Activated CD4-positive, alpha-beta T cell treated with anti-CD3 and anti-CD28 coated beads, Interleukin-2, amount 10 ng/mL, durations not matched to agents 24 days and 14 days (primary cell): ENCODE measurements at regions of chr20 and their contacts with region 1.

Region 1: DNA sequence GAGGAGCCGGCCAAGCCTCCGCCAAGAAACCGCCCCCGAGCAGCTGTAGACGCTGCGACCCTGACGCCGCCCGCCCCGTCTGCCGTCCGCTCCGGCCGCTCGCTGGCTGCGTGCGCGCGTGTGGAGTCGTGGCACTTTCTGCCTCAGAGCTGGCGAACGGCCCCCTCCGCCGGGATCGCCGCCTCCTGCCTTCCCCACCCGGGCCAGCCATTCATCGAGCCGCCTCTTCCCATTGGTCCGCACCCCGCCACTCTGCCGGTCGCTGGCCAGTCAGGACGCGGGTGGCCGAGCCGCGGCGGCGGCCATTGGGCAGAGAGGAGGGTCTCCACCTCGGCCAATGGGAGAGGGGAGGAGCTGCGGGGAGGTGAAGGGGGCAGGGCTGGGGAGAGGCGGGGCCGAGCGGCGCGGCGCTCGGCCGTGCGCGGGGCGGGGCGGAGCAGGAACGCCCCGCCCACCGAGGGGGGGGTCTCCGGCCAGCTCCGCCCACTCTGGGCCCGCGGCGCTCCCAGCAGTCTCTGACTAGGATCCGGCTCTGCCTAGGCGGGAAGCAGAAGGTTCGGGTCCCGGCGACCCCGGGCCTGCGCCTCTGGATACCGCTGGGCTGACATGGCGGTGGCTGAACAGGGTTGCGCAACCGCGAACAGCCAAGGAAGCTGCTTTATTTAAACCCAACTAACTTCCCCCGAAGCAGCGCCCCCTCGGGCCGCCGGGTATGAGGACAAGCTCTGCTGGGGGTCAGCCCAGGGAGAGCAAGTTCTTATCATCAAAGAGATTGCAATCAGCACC is at the start of gene RRBP1:
- DNase-seq: peak; percentile 99
- H3K4me3 Mint-ChIP-seq: peak within 1 kb of the TSS; percentile 90
- H3K27ac Mint-ChIP-seq: peak within 1 kb of the TSS; percentile 92
- H3K4me1 Mint-ChIP-seq: peaks cover 19% of the 10 kb centered on the region
- H3K27me3 Mint-ChIP-seq: peaks cover 39% of the 10 kb centered on the region
- total RNA-seq, gene RRBP1: 47.5 and 49.9 TPM in 2 replicates

Region 2: GRCh38 chr20:17417225-17417624 is 265.1 kb before region 1 on chr20:
- intact Hi-C with region 1: no loop called
- DNase-seq: no peak
- H3K4me3 Mint-ChIP-seq: no peak overlapping the region
- H3K27ac Mint-ChIP-seq: no peak overlapping the region
- H3K4me1 Mint-ChIP-seq: no peaks in the 10 kb centered on the region
- H3K27me3 Mint-ChIP-seq: peaks cover 8% of the 10 kb centered on the region

Region 3: DNA sequence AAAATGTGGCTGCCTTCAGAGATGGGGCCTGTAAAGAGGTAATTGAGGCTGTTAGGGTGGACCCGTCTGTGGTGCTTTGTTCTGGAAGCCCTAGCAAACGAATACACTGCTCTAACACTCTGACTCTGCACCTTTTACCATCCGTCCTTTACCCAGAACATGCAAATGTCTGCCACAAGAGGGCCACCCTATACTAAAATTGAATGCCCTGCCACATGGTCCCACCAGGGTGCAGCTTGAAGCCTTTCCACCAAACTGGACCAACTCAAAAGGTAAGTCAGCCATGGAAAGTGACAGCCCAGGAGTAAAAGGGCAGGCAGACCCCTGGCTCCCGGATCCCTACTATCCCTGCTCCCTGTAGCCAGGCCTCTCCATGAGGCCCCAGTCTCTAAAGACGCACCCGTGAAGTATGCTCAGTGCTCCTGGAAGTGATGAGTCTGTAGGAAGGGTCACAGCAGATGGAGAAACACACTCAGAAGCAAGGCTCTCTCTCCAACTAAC is 145.3 kb before region 1 on chr20:
- intact Hi-C with region 1: loop called (anchors 2 kb)
- DNase-seq: peak; percentile 91
- H3K4me3 Mint-ChIP-seq: no peak overlapping the region
- H3K27ac Mint-ChIP-seq: no peak overlapping the region
- H3K4me1 Mint-ChIP-seq: peaks cover 26% of the 10 kb centered on the region
- H3K27me3 Mint-ChIP-seq: peaks cover 25% of the 10 kb centered on the region

Region 4: GRCh38 chr20:17898548-17898994 is 216.3 kb after region 1 on chr20:
- intact Hi-C with region 1: loop called (anchors 1 kb)
- DNase-seq: peak; percentile 90
- H3K4me3 Mint-ChIP-seq: no peak overlapping the region
- H3K27ac Mint-ChIP-seq: no peak overlapping the region
- H3K4me1 Mint-ChIP-seq: peaks cover 24% of the 10 kb centered on the region
- H3K27me3 Mint-ChIP-seq: peaks cover 33% of the 10 kb centered on the region

Region 5: DNA sequence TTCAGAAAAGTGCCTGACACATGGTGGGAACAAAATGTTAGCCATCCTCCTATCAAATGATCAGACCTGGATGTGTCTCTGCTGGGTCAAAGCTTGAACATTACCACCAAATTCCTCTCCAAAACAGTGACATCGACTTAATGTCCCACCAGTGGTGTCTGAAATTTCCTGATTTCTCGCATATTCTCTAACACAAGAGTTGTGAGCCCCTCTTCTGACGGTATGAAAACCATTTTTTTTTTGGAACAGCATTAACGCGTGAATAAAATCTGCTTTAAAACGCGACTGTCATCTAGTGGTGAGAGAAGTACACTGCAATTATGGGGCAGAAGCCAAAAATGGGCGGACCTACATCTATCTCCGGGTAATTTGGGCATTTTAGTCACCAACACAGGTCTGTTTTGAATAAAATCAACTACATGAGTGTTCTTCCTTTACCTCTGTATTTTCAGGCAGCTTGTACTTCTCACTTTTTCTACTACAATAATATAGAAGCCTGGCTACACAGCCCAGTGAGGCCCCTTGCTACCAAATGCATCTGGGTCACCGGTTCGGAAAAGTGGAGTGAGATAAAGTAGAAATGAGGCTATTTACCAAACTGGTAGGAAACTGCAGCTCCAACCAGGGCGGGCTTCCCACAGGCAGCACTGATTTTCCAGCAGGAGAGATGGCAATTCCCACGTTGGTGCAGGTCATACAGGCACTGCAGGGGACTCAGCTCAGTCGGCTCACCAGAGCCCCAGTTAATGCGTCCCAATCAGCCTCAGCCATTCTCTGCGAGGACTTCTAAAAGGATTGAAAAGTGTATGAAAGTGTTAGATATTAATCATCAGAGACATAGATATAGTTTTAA is 313.9 kb after region 1 on chr20:
- intact Hi-C with region 1: loop called (anchors 1 kb)
- DNase-seq: peak; percentile 87
- H3K4me3 Mint-ChIP-seq: no peak overlapping the region
- H3K27ac Mint-ChIP-seq: no peak overlapping the region
- H3K4me1 Mint-ChIP-seq: peaks cover 38% of the 10 kb centered on the region
- H3K27me3 Mint-ChIP-seq: peaks cover 3% of the 10 kb centered on the region

Region 6: GRCh38 chr20:18587665-18588573 is 905.6 kb after region 1 on chr20 and contains the start of gene DTD1:
- intact Hi-C with region 1: loop called (anchors 5 kb)
- DNase-seq: peak; percentile 96
- H3K4me3 Mint-ChIP-seq: peak within 1 kb of the TSS; percentile 94
- H3K27ac Mint-ChIP-seq: peak within 1 kb of the TSS; percentile 88
- H3K4me1 Mint-ChIP-seq: peaks cover 25% of the 10 kb centered on the region
- H3K27me3 Mint-ChIP-seq: peaks cover 7% of the 10 kb centered on the region
- total RNA-seq, gene DTD1: 49.2 and 49.9 TPM in 2 replicates